K562 (cell line): ENCODE measurements at regions of chr11 and their contacts with region 1.

Region 1: DNA sequence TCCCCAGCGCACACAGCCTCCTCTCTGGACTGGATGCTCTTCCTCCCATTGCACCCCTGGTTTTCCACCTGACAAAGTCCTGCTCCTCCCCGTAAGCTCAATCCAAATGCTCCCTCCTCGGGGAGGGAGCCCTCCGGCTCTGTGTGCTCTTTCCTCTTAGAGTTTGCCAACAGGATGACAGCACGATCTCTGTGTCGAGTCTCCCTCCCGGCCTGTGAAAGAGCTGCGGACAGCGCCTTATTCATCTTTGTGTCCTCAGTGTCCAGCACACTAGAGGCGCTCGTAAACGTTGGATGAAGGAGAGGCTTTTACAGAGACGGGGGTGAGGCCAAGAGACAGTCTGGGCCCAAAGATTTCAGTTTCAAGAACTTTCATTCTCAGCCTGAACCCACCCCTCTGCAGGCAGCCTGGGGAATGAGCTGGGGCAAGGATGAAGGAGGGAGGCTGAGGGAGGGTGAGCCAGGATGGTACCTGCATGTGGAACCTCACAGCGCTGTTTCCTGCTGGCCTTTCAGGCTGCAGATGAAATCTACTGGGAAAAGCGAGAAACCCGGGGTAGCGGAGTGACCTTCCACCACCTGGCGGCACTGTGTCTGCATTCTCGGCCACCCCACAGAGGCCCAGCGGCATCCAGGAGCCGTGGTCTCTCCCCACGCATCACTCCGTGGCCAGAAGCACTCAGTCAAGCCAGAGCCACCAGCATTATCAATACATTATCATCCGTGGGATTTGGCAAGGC is 8.5 kb upstream of the TMPRSS4 start:
- DNase-seq: peak; percentile 62 to 73 (median 63)
- ATAC-seq: peak; percentile 93
- H3K4me3 ChIP-seq: no peak overlapping the region
- H3K27ac ChIP-seq: no peak overlapping the region
- H3K4me1 ChIP-seq: peaks cover 12 to 15% of the 10 kb centered on the region in 2 experiments; a peak in 4 of 5 replicates
- H3K27me3 ChIP-seq: peaks cover 6 to 16% of the 10 kb centered on the region in 2 experiments; a peak in 4 of 5 replicates
- CTCF ChIP-seq: peak; percentile 74 to 83 (median 79)
- EP300 ChIP-seq: no peak
- POLR2A ChIP-seq: no peak
- RAD21 ChIP-seq: peak; percentile 43 to 78; a peak in 3 of 4 replicates

Region 2: GRCh38 chr11:118126082-118126838 is 57.9 kb after region 1 on chr11:
- CTCF ChIA-PET with region 1: no interaction called
- POLR2A ChIA-PET with region 1: no interaction called
- in situ Hi-C with region 1: no loop called
- intact Hi-C with region 1: loop called (anchors 5 kb)
- DNase-seq: peak in 1 of 4 experiments; percentile 27
- ATAC-seq: peak; percentile 78
- H3K4me3 ChIP-seq: no peak overlapping the region
- H3K27ac ChIP-seq: peak overlapping the region; percentile 58; the same call in 2 of the 3 replicates
- H3K4me1 ChIP-seq: no peaks in the 10 kb centered on the region
- H3K27me3 ChIP-seq: no peaks in the 10 kb centered on the region
- CTCF ChIP-seq: no peak
- EP300 ChIP-seq: no peak
- POLR2A ChIP-seq: peak; percentile 90
- RAD21 ChIP-seq: no peak

Region 3: DNA sequence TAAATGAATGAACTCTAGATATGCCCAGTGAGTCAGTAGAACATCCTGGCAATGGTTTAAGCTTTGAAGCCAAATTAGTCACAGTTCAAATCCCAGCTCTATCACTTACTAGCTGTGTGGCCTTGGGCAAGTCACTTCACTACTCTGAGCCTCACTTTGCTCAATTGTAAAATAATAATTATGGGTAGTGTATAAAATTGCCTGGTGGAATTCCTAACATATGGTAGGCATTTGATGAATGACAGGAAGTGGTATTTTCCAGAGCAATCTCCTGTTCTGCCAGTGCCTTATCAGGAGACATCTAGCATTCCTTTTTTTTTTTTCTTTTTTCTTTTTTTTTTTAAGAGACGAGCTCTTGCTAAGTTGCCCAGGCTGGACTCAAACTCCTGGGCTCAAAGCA is 71.2 kb after region 1 on chr11:
- CTCF ChIA-PET with region 1: no interaction called
- POLR2A ChIA-PET with region 1: no interaction called
- in situ Hi-C with region 1: no loop called
- intact Hi-C with region 1: loop called (anchors 1 kb)
- DNase-seq: no peak
- ATAC-seq: no peak
- H3K4me3 ChIP-seq: no peak overlapping the region
- H3K27ac ChIP-seq: no peak overlapping the region
- H3K4me1 ChIP-seq: no peaks in the 10 kb centered on the region
- H3K27me3 ChIP-seq: peaks cover 18 to 61% of the 10 kb centered on the region in 2 experiments
- CTCF ChIP-seq: no peak
- EP300 ChIP-seq: no peak
- POLR2A ChIP-seq: no peak
- RAD21 ChIP-seq: no peak

Region 4: GRCh38 chr11:118145285-118146227 is 77.2 kb after region 1 on chr11:
- CTCF ChIA-PET with region 1: no interaction called
- POLR2A ChIA-PET with region 1: no interaction called
- in situ Hi-C with region 1: no loop called
- intact Hi-C with region 1: loop called (anchors 2 kb)
- DNase-seq: peak; percentile 87 to 96 (median 94)
- ATAC-seq: peak; percentile 97
- H3K4me3 ChIP-seq: peak overlapping the region; percentile 46
- H3K27ac ChIP-seq: no peak overlapping the region
- H3K4me1 ChIP-seq: peaks cover 0 to 11% of the 10 kb centered on the region in 2 experiments; a peak in 3 of 5 replicates
- H3K27me3 ChIP-seq: peaks cover 7 to 62% of the 10 kb centered on the region in 2 experiments; a peak in 4 of 5 replicates
- CTCF ChIP-seq: peak; percentile 86 to 93 (median 92)
- EP300 ChIP-seq: no peak
- POLR2A ChIP-seq: no peak
- RAD21 ChIP-seq: peak; percentile 94 to 96

Region 5: DNA sequence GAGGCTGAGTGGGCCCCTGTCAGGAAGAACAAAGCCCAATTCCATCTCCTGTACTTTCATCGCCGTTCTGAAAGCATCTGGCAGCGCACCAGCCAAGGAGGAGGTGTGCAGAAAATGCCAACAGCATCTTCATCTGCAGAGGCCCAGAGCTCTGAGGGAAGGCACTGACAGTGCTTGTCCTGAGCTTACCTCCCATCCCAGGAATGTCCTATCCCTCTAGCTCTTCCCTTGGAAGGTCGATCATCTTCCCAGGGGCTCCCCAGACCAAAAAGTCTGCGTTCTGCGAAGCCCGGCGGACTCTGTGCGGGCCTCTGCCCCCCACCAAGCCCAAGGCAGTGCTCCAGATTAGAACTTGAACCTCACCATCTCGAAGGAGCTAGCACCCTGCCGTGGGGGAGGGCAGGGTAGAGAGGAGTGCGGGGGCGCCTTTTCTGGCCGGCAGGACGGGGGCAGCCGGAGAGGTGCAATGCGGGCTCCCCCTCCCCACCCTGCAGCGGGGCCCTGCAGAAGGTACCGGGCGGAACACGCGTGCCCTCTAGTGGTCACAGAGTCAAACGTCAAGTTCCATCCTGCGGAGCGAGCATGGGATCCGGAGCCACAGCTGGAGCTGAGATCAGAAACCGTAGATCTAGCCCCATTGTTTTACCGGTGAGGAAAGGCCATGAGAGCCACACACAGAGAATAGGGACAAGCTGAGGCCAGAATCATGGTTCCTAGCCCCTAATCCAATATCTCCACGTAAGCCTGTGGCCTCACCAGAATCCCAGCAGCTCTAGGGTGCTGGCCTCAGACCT is 103.1 kb after region 1 on chr11:
- CTCF ChIA-PET with region 1: no interaction called
- POLR2A ChIA-PET with region 1: no interaction called
- in situ Hi-C with region 1: no loop called
- intact Hi-C with region 1: loop called (anchors 1 kb)
- DNase-seq: peak; percentile 80 to 90 (median 87)
- ATAC-seq: peak; percentile 94
- H3K4me3 ChIP-seq: no peak overlapping the region
- H3K27ac ChIP-seq: no peak overlapping the region
- H3K4me1 ChIP-seq: peaks cover 0 to 8% of the 10 kb centered on the region in 2 experiments; a peak in 2 of 5 replicates
- H3K27me3 ChIP-seq: peaks cover 33 to 83% of the 10 kb centered on the region in 2 experiments
- CTCF ChIP-seq: peak; percentile 85 to 88 (median 87)
- EP300 ChIP-seq: no peak
- POLR2A ChIP-seq: no peak
- RAD21 ChIP-seq: peak; percentile 78 to 88

Region 6: DNA sequence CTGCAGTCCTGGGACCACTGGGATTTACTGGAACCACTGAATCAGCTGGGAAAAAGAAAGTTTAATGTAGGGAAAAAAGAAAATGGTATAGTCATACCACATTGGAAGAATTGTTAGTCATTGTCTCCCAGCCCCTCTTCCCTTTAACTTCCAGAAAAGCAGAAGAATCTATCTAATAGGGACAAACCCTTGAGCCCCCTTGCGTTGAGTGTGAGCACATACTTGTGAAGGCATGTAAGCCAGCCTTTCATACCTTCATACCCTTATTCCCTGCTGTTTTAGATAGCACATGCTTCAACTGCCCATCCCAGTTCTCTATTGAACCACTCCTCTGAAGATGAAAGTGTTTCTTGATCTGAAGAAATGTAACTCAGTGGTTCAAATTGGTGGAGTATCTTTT is 604.5 kb after region 1 on chr11:
- CTCF ChIA-PET with region 1: no interaction called
- POLR2A ChIA-PET with region 1: no interaction called
- in situ Hi-C with region 1: no loop called
- intact Hi-C with region 1: no loop called
- DNase-seq: peak in 3 of 4 experiments; percentile 21 to 56 (median 34)
- ATAC-seq: peak; percentile 92
- H3K4me3 ChIP-seq: no peak overlapping the region
- H3K27ac ChIP-seq: no peak overlapping the region
- H3K4me1 ChIP-seq: no peaks in the 10 kb centered on the region
- H3K27me3 ChIP-seq: peaks cover 0 to 4% of the 10 kb centered on the region in 2 experiments; a peak in 1 of 5 replicates
- CTCF ChIP-seq: peak; percentile 45 to 48 (median 47); a peak in 4 of 6 replicates
- EP300 ChIP-seq: no peak
- POLR2A ChIP-seq: no peak
- RAD21 ChIP-seq: peak in 1 of 2 experiments; percentile 43; a peak in 2 of 4 replicates